ENCODE measurements at regions of chr5 and their contacts with region 1.

Region 1: GRCh38 chr5:76402886-76403765 is at the start of gene IQGAP2:
- DNase-seq: peak; percentile 88 to 94 (median 90)
- ATAC-seq: peak; percentile 73
- H3K4me3 ChIP-seq: peak within 1 kb of the TSS; percentile 81
- H3K4me3 Mint-ChIP-seq: peak within 1 kb of the TSS; percentile 87 to 99 (median 92)
- H3K27ac ChIP-seq: peak within 1 kb of the TSS; percentile 94
- H3K27ac Mint-ChIP-seq: peak within 1 kb of the TSS; percentile 94 to 100 (median 97)
- H3K4me1 ChIP-seq: peaks cover 19 to 20% of the 10 kb centered on the region in 2 donors
- H3K4me1 Mint-ChIP-seq: peaks cover 35 to 62% (median 55%) of the 10 kb centered on the region in 7 donors
- H3K27me3 ChIP-seq: no peaks in the 10 kb centered on the region
- H3K27me3 Mint-ChIP-seq: peaks cover 0 to 14% (median 0%) of the 10 kb centered on the region in 5 donors
- total RNA-seq, gene IQGAP2: 69.1 to 114 (median 88.0) TPM

Region 2: GRCh38 chr5:75511435-75512384 is 891.4 kb before region 1 on chr5 and contains the starts of genes CERT1 and POLK:
- CTCF ChIA-PET with region 1: no interaction called
- POLR2A ChIA-PET with region 1: no interaction called
- intact Hi-C with region 1: loop called in 1 of 2 experiments (anchors 2 kb)
- DNase-seq: peak; percentile 70 to 94 (median 90)
- ATAC-seq: peak; percentile 95
- H3K4me3 ChIP-seq: peak within 1 kb of the TSS; percentile 78
- H3K4me3 Mint-ChIP-seq: peak within 1 kb of the TSS; percentile 89 to 97 (median 94)
- H3K27ac ChIP-seq: peak within 1 kb of the TSS; percentile 75
- H3K27ac Mint-ChIP-seq: peak within 1 kb of the TSS; percentile 84 to 98 (median 93)
- H3K4me1 ChIP-seq: peaks cover 14 to 28% of the 10 kb centered on the region in 2 donors
- H3K4me1 Mint-ChIP-seq: peaks cover 29 to 77% (median 54%) of the 10 kb centered on the region in 7 donors
- H3K27me3 ChIP-seq: no peaks in the 10 kb centered on the region
- H3K27me3 Mint-ChIP-seq: no peaks in the 10 kb centered on the region
- total RNA-seq, gene CERT1: 34.4 to 60.4 (median 39.3) TPM
- total RNA-seq, gene POLK: 20.6 to 36.6 (median 24.9) TPM

Region 3: GRCh38 chr5:76256116-76256889 is 146.8 kb before region 1 on chr5:
- CTCF ChIA-PET with region 1: no interaction called
- POLR2A ChIA-PET with region 1: no interaction called
- intact Hi-C with region 1: loop called in 1 of 2 experiments (anchors 2 kb)
- DNase-seq: peak; percentile 20 to 70 (median 56)
- ATAC-seq: peak; percentile 96
- H3K4me3 ChIP-seq: no peak overlapping the region
- H3K4me3 Mint-ChIP-seq: peak overlapping the region in 4 of 10 donors; percentile 23 to 45 (median 42)
- H3K27ac ChIP-seq: no peak overlapping the region
- H3K27ac Mint-ChIP-seq: peak overlapping the region in 3 of 9 donors; percentile 8 to 23 (median 11)
- H3K4me1 ChIP-seq: no peaks in the 10 kb centered on the region
- H3K4me1 Mint-ChIP-seq: peaks cover 0 to 12% (median 3%) of the 10 kb centered on the region in 7 donors
- H3K27me3 ChIP-seq: no peaks in the 10 kb centered on the region
- H3K27me3 Mint-ChIP-seq: peaks cover 4 to 36% (median 4%) of the 10 kb centered on the region in 5 donors

Region 4: DNA sequence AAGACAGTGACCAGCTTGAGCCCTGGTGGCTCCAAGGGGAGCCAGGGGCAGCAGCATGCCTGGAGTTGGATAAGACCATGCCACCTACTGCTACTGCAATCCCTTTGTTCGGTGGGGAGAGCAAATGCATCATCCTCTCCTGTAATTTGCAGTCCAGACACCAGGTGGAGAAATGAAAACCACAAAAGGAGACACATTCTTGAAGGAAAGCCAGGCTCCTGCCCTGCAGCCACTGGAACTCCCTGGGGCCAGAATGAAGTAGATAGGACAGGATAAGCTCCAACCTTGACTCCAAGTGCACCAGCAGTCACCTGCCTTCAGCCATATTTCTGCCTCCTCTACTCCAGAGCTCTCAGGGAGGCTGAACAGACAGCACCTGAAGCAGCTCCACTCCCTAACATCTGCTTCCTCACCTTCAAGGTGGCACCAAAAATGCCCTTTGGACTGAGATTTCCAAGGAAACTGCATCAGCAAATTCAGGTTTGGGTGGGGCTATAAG is 65.1 kb before region 1 on chr5:
- CTCF ChIA-PET with region 1: interaction called, 3 read pairs
- POLR2A ChIA-PET with region 1: interaction called, 5 read pairs
- intact Hi-C with region 1: loop called (anchors 1 kb)
- DNase-seq: peak in 7 of 9 donors; percentile 44 to 63 (median 55)
- ATAC-seq: peak; percentile 78
- H3K4me3 ChIP-seq: no peak overlapping the region
- H3K4me3 Mint-ChIP-seq: no peak overlapping the region
- H3K27ac ChIP-seq: no peak overlapping the region
- H3K27ac Mint-ChIP-seq: peak overlapping the region in 4 of 9 donors; percentile 10 to 40 (median 22)
- H3K4me1 ChIP-seq: peaks cover 8 to 15% of the 10 kb centered on the region in 2 donors
- H3K4me1 Mint-ChIP-seq: peaks cover 19 to 35% (median 26%) of the 10 kb centered on the region in 7 donors
- H3K27me3 ChIP-seq: no peaks in the 10 kb centered on the region
- H3K27me3 Mint-ChIP-seq: no peaks in the 10 kb centered on the region

Region 5: GRCh38 chr5:76367623-76368371 is 35.3 kb before region 1 on chr5:
- CTCF ChIA-PET with region 1: no interaction called
- POLR2A ChIA-PET with region 1: no interaction called
- intact Hi-C with region 1: no loop called
- DNase-seq: peak in 1 of 9 donors; percentile 30
- ATAC-seq: peak; percentile 61
- H3K4me3 ChIP-seq: no peak overlapping the region
- H3K4me3 Mint-ChIP-seq: no peak overlapping the region
- H3K27ac ChIP-seq: no peak overlapping the region
- H3K27ac Mint-ChIP-seq: peak overlapping the region in 1 of 9 donors; percentile 69
- H3K4me1 ChIP-seq: no peaks in the 10 kb centered on the region
- H3K4me1 Mint-ChIP-seq: peaks cover 0 to 26% (median 5%) of the 10 kb centered on the region in 7 donors
- H3K27me3 ChIP-seq: no peaks in the 10 kb centered on the region
- H3K27me3 Mint-ChIP-seq: no peaks in the 10 kb centered on the region

Region 6: DNA sequence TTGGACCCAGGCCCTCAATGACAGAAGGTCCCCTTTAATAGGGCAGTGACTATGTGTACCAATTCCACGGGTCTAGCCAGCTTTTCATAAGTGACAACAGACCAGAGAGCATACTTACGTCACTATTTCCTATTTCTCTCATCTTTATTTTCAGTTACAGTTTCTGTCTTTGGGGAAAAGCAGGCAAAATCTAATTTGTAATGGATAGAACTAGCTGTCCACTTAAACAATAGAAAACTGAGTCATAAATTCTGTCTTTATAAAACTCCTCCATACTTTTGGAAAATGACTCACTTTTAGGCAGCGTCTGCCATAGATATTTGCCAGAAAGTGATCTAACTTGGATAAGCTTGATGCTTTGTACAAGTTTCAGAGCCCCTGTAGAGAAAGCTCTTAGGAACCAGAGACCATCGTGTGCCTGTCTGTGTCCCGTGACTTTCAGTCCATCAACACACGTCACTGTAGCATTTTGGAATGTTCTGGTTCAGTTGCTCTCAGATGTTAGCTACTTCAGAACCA is 118.2 kb after region 1 on chr5:
- CTCF ChIA-PET with region 1: no interaction called
- POLR2A ChIA-PET with region 1: no interaction called
- intact Hi-C with region 1: loop called in 1 of 2 experiments (anchors 2 kb)
- DNase-seq: no peak
- ATAC-seq: peak; percentile 51
- H3K4me3 ChIP-seq: no peak overlapping the region
- H3K4me3 Mint-ChIP-seq: peak overlapping the region in 5 of 10 donors; percentile 27 to 70 (median 35)
- H3K27ac ChIP-seq: no peak overlapping the region
- H3K27ac Mint-ChIP-seq: peak overlapping the region in 6 of 9 donors; percentile 6 to 78 (median 32)
- H3K4me1 ChIP-seq: peaks cover 0 to 7% of the 10 kb centered on the region in 2 donors
- H3K4me1 Mint-ChIP-seq: peaks cover 43 to 73% (median 55%) of the 10 kb centered on the region in 7 donors
- H3K27me3 ChIP-seq: no peaks in the 10 kb centered on the region
- H3K27me3 Mint-ChIP-seq: no peaks in the 10 kb centered on the region

Region 7: GRCh38 chr5:76641514-76642120 is 238.5 kb after region 1 on chr5:
- CTCF ChIA-PET with region 1: no interaction called
- POLR2A ChIA-PET with region 1: no interaction called
- intact Hi-C with region 1: loop called (anchors 1 to 2 kb)
- DNase-seq: peak; percentile 13 to 71 (median 55)
- ATAC-seq: peak; percentile 78
- H3K4me3 ChIP-seq: no peak overlapping the region
- H3K4me3 Mint-ChIP-seq: no peak overlapping the region
- H3K27ac ChIP-seq: no peak overlapping the region
- H3K27ac Mint-ChIP-seq: no peak overlapping the region
- H3K4me1 ChIP-seq: no peaks in the 10 kb centered on the region
- H3K4me1 Mint-ChIP-seq: peaks cover 0 to 13% (median 0%) of the 10 kb centered on the region in 7 donors
- H3K27me3 ChIP-seq: no peaks in the 10 kb centered on the region
- H3K27me3 Mint-ChIP-seq: no peaks in the 10 kb centered on the region

Measured in naive thymus-derived CD4-positive, alpha-beta T cell (primary cell).